OCI-LY7 (cell line): ENCODE measurements at regions of chr19 and their contacts with region 1.

Region 1: GRCh38 chr19:16801596-16801995 is 27.6 kb upstream of the SIN3B start:
- DNase-seq: peak; percentile 33
- H3K4me3 ChIP-seq: no peak overlapping the region
- H3K27ac ChIP-seq: no peak overlapping the region
- H3K4me1 ChIP-seq: peaks cover 7% of the 10 kb centered on the region
- CTCF ChIP-seq: no peak

Region 2: DNA sequence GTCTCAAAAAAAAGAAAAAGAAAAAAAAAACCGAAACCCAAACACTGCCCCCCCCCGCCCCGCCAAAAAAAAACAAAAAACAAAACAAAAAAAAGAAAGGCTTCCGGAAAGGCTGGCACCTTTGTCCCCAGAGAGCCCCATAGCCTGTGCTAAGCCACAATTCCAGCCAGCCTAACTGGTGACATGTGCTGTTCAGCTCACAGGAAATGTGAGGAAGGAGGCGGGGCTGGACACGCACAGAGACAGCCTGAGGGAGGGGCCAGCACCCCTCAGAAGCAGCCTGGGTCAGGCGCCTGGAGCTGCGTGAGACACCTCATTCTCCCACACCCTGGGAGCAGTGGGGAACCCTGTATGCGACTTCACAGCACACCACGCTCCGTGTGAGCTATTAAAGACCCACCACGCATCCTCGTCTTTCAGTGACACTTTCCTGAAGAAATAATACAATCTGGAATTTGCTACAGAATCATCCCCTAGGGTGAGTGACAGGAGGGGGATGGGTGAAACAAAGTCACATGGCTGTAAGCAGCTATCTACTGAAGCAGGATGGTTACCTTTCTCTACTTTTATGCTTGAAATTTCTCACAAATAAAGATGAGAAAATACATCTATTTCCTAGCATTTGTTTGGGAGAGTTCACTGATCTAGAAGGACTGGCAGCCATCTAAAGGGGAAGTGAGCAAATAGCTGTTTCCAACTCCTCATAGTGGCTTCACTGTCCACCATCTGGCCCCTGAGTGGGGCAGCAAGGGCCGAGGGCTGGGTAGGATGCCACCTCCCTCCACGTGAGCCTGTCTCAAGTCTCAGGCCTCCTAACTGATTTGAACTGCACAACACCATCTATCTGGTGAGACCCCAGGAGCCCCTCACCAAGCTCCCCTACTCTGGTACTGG is 217.1 kb before region 1 on chr19:
- CTCF ChIA-PET with region 1: no interaction called
- POLR2A ChIA-PET with region 1: no interaction called
- intact Hi-C with region 1: no loop called
- DNase-seq: peak; percentile 94
- H3K4me3 ChIP-seq: peak overlapping the region; percentile 73
- H3K27ac ChIP-seq: peak overlapping the region; percentile 97
- H3K4me1 ChIP-seq: peaks cover 82% of the 10 kb centered on the region
- CTCF ChIP-seq: no peak

Region 3: DNA sequence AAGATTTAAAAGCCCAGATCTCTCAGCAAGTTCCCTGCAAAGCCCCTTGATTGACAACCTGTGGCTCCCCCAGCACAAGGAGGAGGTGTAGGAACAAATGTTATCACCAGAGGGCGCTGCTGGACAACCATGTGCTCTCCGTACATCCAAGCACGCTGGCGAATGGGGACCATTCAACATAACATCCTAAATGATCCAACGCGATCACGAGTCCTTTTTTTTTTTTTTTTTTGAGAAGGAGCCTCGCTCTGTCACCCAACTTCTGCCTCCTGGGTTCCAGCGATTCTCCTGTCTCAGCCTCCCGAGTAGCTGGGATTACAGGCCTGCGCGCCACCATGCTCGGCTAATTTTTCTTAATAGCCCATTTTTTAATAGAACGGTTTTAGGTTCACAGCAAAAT is 30.0 kb before region 1 on chr19:
- CTCF ChIA-PET with region 1: interaction called, 11 read pairs
- POLR2A ChIA-PET with region 1: no interaction called
- intact Hi-C with region 1: no loop called
- DNase-seq: peak; percentile 80
- H3K4me3 ChIP-seq: no peak overlapping the region
- H3K27ac ChIP-seq: no peak overlapping the region
- H3K4me1 ChIP-seq: no peaks in the 10 kb centered on the region
- CTCF ChIP-seq: peak; percentile 88